ENCODE measurements at regions of chr14 and their contacts with region 1.

Region 1: DNA sequence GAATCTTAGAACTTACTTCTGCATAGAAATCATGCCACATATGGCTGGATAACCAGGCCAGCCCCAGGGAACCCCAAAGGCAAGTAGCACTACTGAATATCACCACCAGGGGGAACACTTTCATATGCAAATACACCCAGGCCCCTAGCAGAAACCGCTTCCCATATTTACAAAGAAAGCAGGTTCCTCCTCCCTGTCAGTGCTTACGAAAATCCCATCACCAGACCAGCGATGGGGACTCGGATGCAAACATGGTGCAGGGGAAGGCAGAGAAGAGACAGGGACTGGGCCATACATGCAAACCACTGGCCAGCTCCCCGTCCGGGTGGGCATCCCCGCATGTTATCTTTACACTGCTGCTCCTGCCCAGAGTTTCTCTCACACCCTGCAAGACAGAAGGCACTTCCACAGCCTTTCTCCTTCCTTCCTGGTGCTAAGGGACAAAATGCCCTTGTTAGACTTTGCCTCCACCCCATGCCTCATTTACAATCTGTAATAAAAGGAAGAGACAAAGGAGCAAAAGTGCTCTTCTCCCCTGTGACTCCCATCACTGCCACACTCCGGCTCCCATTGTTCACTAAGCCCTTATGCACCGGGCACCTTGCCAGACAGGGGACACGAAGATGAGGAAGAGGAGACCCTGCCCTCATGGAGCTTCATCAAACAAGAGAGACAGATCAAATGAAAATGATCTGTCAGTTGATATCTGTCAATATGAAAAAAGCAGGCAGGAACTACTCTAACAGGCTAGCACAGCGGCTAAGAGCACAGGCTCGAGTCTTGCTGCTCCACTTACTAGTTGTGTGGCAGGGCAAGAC is 62.3 kb downstream of the PTPN21 start:
- DNase-seq: peak; percentile 15 to 75 (median 59)
- ATAC-seq: peak; percentile 89
- H3K4me3 ChIP-seq: no peak overlapping the region
- H3K4me3 Mint-ChIP-seq: no peak overlapping the region
- H3K27ac ChIP-seq: no peak overlapping the region
- H3K27ac Mint-ChIP-seq: no peak overlapping the region
- H3K4me1 ChIP-seq: no peaks in the 10 kb centered on the region
- H3K4me1 Mint-ChIP-seq: no peaks in the 10 kb centered on the region
- H3K27me3 ChIP-seq: no peaks in the 10 kb centered on the region
- H3K27me3 Mint-ChIP-seq: peaks cover 3% of the 10 kb centered on the region
- CTCF ChIP-seq: peak; percentile 77

Region 2: GRCh38 chr14:88562831-88563686 is 70.6 kb after region 1 on chr14 and contains the start of gene ZC3H14:
- CTCF ChIA-PET with region 1: no interaction called
- POLR2A ChIA-PET with region 1: no interaction called
- intact Hi-C with region 1: loop called (anchors 1 to 2 kb)
- DNase-seq: peak; percentile 69 to 94 (median 86)
- ATAC-seq: peak; percentile 95
- H3K4me3 ChIP-seq: peak within 1 kb of the TSS; percentile 75 to 91
- H3K4me3 Mint-ChIP-seq: peak within 1 kb of the TSS; percentile 96
- H3K27ac ChIP-seq: peak within 1 kb of the TSS; percentile 52 to 66
- H3K27ac Mint-ChIP-seq: peak within 1 kb of the TSS; percentile 91
- H3K4me1 ChIP-seq: peaks cover 20% of the 10 kb centered on the region
- H3K4me1 Mint-ChIP-seq: peaks cover 35% of the 10 kb centered on the region
- H3K27me3 ChIP-seq: no peaks in the 10 kb centered on the region
- H3K27me3 Mint-ChIP-seq: peaks cover 7% of the 10 kb centered on the region
- CTCF ChIP-seq: no peak
- total RNA-seq, gene ZC3H14: 36.3 to 39.3 TPM

Region 3: DNA sequence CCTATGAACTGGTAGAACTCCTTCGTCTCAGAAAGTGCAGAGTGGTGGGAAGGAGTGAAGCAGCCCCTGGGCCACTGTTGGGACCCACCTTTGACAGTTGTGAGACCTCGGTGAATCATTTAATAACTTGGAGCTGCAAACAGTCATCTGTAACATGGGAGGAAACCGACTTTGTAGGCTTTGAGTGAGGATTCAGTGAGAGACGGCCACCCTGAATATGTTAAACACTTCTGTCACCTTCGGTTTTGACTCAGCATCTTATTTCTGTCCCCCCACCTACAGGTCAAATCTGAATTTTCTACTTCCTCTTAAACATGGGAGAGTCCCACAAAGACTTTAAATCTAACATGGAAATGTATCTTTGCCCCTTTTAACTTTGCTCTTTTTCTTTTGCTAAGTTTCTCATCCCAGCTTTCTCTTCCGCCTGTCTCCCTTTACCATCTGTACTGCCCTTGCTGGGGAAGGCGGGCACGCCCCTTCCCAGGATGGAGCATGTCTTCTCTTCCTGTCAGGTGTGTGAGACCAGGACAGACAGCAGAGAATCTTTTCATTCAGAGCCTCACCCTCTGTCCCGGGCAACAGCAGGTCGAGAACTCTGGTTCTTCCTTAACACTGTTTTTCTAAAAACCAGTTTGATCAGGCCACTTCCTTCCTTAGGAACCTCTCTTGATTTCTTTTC is 107.4 kb after region 1 on chr14:
- CTCF ChIA-PET with region 1: no interaction called
- POLR2A ChIA-PET with region 1: no interaction called
- intact Hi-C with region 1: loop called in 1 of 2 experiments (anchors 10 kb)
- DNase-seq: no peak
- ATAC-seq: no peak
- H3K4me3 ChIP-seq: no peak overlapping the region
- H3K4me3 Mint-ChIP-seq: no peak overlapping the region
- H3K27ac ChIP-seq: no peak overlapping the region
- H3K27ac Mint-ChIP-seq: peak overlapping the region; percentile 43
- H3K4me1 ChIP-seq: peaks cover 4% of the 10 kb centered on the region
- H3K4me1 Mint-ChIP-seq: peaks cover 18% of the 10 kb centered on the region
- H3K27me3 ChIP-seq: no peaks in the 10 kb centered on the region
- H3K27me3 Mint-ChIP-seq: no peaks in the 10 kb centered on the region
- CTCF ChIP-seq: no peak

Region 4: DNA sequence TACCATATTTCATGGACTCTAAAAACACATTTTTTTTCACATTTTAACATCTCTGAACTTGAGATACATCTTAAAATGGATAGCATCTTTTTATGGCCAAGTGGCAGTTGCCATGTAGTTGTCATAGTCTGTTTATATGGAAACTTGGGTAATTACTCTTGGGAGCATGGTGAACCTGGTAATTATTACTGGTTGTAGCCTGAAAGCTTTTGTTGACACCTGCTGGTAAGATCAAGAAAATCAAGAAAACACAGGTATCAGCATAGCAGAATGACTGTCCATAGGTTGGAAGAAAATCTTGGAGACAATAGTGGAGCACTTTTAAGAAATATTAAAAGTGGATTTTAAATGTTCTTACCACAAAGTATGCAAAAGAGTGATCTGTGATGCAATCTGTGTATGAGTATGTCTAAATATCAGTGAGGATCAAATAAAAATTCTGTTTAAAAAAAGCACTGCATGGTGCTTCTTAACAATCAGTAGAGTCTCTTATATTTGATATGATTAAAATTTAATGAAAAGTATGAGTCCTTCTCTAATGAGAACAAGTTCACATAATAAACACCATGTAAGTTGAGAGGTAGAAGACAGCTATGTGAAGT is 376.2 kb after region 1 on chr14:
- CTCF ChIA-PET with region 1: interaction called, 4 read pairs
- POLR2A ChIA-PET with region 1: no interaction called
- intact Hi-C with region 1: loop called in 1 of 2 experiments (anchors 1 kb)
- DNase-seq: peak in 2 of 9 experiments; percentile 21 to 36
- ATAC-seq: no peak
- H3K4me3 ChIP-seq: no peak overlapping the region
- H3K4me3 Mint-ChIP-seq: no peak overlapping the region
- H3K27ac ChIP-seq: no peak overlapping the region
- H3K27ac Mint-ChIP-seq: no peak overlapping the region
- H3K4me1 ChIP-seq: no peaks in the 10 kb centered on the region
- H3K4me1 Mint-ChIP-seq: no peaks in the 10 kb centered on the region
- H3K27me3 ChIP-seq: no peaks in the 10 kb centered on the region
- H3K27me3 Mint-ChIP-seq: no peaks in the 10 kb centered on the region
- CTCF ChIP-seq: peak; percentile 15

Region 5: DNA sequence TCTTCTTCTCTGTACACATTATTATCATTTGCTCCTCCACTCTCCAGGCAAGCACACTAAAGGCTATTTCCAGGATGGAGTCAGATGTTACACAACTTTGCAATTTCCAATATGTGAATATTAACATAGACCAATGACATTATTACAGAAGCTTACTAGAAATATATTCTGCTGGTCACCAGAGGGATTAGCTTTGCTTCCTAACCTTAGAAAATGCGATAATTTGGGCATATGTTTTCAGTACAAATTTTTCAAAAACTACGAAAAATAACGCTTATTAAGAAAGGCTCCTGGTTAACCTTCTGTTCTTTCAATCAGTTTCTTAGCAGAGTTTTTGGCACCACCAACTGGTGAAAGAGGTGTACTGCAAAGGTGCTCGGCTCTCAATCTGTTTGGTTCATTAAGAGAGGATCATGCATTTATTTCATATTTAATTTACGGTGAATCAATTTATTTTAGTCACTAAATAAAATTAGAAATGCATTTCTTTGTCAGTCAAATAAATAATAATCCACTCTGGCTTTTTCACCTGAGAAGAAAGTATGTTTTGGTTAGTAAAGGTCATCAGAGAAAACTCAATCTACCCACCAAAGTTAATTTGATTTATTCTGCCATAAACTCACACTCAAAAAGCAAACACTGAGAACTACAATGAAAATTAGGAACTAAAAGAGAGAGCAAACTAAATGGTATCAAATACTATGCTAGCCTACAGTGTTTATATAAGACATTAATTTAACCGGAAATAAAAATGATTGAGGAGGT is 1422.8 kb after region 1 on chr14:
- CTCF ChIA-PET with region 1: no interaction called
- POLR2A ChIA-PET with region 1: no interaction called
- intact Hi-C with region 1: loop called (anchors 5 to 10 kb)
- DNase-seq: peak; percentile 24 to 74 (median 60)
- ATAC-seq: peak; percentile 62
- H3K4me3 ChIP-seq: no peak overlapping the region
- H3K4me3 Mint-ChIP-seq: no peak overlapping the region
- H3K27ac ChIP-seq: no peak overlapping the region
- H3K27ac Mint-ChIP-seq: no peak overlapping the region
- H3K4me1 ChIP-seq: peaks cover 3% of the 10 kb centered on the region
- H3K4me1 Mint-ChIP-seq: peaks cover 3% of the 10 kb centered on the region
- H3K27me3 ChIP-seq: no peaks in the 10 kb centered on the region
- H3K27me3 Mint-ChIP-seq: peaks cover 2% of the 10 kb centered on the region
- CTCF ChIP-seq: peak; percentile 97